Right cardiac atrium (tissue), 5 donors: ENCODE measurements at regions of chr7 and their contacts with region 1.

Region 1: GRCh38 chr7:36207451-36208291 is 54.6 kb downstream of the EEPD1 start:
- DNase-seq: peak; percentile 43 to 79 (median 78)
- ATAC-seq: peak; percentile 85
- H3K4me3 ChIP-seq: no peak overlapping the region
- H3K27ac ChIP-seq: no peak overlapping the region
- H3K4me1 ChIP-seq: peaks cover 19% of the 10 kb centered on the region
- H3K27me3 ChIP-seq: no peaks in the 10 kb centered on the region

Region 2: GRCh38 chr7:36155811-36156361 is 51.8 kb before region 1 on chr7:
- intact Hi-C with region 1: loop called in 1 of 4 experiments (anchors 5 kb)
- DNase-seq: peak; percentile 66 to 81 (median 76)
- ATAC-seq: no peak
- H3K4me3 ChIP-seq: peak overlapping the region; percentile 21
- H3K27ac ChIP-seq: peak overlapping the region; percentile 1
- H3K4me1 ChIP-seq: peaks cover 8% of the 10 kb centered on the region
- H3K27me3 ChIP-seq: no peaks in the 10 kb centered on the region